CD8-positive, alpha-beta T cell (primary cell): ENCODE measurements at regions of chr5 and their contacts with region 1.

Region 1: GRCh38 chr5:160390787-160391696 is 8.8 kb downstream of the FAM200C start:
- DNase-seq: peak in 2 of 9 experiments; percentile 19 to 42
- ATAC-seq: peak; percentile 23
- H3K4me3 ChIP-seq: no peak overlapping the region
- H3K4me3 Mint-ChIP-seq: no peak overlapping the region
- H3K27ac ChIP-seq: no peak overlapping the region
- H3K27ac Mint-ChIP-seq: no peak overlapping the region
- H3K4me1 ChIP-seq: no peaks in the 10 kb centered on the region
- H3K4me1 Mint-ChIP-seq: no peaks in the 10 kb centered on the region
- H3K27me3 ChIP-seq: no peaks in the 10 kb centered on the region
- H3K27me3 Mint-ChIP-seq: no peaks in the 10 kb centered on the region
- CTCF ChIP-seq: peak; percentile 66

Region 2: GRCh38 chr5:159444441-159445082 is 946.5 kb before region 1 on chr5:
- CTCF ChIA-PET with region 1: interaction called, 3 read pairs
- POLR2A ChIA-PET with region 1: no interaction called
- intact Hi-C with region 1: loop called in 1 of 2 experiments (anchors 5 kb)
- DNase-seq: peak in 2 of 9 experiments; percentile 30 to 64
- ATAC-seq: no peak
- H3K4me3 ChIP-seq: no peak overlapping the region
- H3K4me3 Mint-ChIP-seq: no peak overlapping the region
- H3K27ac ChIP-seq: no peak overlapping the region
- H3K27ac Mint-ChIP-seq: no peak overlapping the region
- H3K4me1 ChIP-seq: no peaks in the 10 kb centered on the region
- H3K4me1 Mint-ChIP-seq: no peaks in the 10 kb centered on the region
- H3K27me3 ChIP-seq: no peaks in the 10 kb centered on the region
- H3K27me3 Mint-ChIP-seq: no peaks in the 10 kb centered on the region
- CTCF ChIP-seq: no peak

Region 3: DNA sequence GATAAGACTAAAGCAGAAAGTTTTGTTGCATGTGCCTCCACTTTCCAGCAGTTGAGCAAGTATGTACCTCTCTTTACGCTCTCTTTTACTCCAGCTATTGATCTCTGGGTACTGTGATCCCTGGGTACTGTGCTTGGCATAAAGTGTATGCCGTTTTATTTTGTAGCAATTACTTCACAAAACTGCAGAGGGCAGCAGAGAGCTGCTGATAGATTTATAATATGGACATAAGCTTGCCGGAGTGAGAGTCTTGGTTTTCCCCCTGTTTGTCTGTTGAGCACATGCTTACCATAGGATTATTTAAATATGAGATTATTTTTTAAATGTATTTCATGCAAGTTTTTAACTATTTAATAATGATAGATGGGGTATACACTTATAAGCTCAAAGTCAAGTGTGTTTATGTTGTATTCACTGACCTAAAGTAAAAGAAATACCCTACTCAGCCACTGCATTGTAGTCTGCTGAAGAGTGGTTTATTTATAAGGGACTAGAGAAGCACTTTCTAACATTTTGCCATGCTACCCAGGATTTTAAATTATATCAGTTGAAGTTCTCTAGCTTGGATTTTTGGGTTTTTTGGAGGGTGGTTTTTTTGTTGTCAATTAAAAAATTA is 369.1 kb before region 1 on chr5:
- CTCF ChIA-PET with region 1: interaction called, 12 read pairs
- POLR2A ChIA-PET with region 1: no interaction called
- intact Hi-C with region 1: loop called (anchors 2 kb)
- DNase-seq: peak; percentile 4 to 80 (median 53)
- ATAC-seq: peak; percentile 91
- H3K4me3 ChIP-seq: no peak overlapping the region
- H3K4me3 Mint-ChIP-seq: no peak overlapping the region
- H3K27ac ChIP-seq: no peak overlapping the region
- H3K27ac Mint-ChIP-seq: peak overlapping the region; percentile 42
- H3K4me1 ChIP-seq: peaks cover 3% of the 10 kb centered on the region
- H3K4me1 Mint-ChIP-seq: peaks cover 35% of the 10 kb centered on the region
- H3K27me3 ChIP-seq: no peaks in the 10 kb centered on the region
- H3K27me3 Mint-ChIP-seq: no peaks in the 10 kb centered on the region
- CTCF ChIP-seq: peak; percentile 91

Region 4: DNA sequence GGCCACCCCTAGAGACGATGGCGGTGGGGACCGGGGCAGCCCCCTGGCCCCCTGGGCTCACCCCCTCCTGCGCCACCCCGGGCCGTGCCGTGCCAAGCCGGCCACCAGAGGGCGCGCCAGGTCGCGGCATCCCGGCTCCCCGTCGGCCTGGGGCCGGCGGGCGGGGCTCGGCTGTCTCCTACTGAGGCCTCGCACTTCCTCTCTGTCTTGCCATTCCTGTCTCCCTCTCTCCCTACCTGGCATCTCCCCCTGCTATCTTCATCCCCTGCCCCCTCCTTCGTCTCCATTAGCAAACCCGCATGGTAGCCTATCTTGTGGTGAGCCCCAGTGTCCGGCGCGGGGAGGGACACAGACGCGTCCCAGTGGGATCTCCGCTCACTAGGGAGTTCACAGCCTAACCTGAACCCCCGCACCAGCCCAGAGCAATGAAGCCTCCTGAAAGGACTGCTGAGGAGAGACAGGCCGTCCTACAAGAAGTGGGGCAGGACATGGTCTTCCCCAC is 191.6 kb before region 1 on chr5:
- CTCF ChIA-PET with region 1: interaction called, 5 read pairs
- POLR2A ChIA-PET with region 1: no interaction called
- intact Hi-C with region 1: loop called (anchors 1 kb)
- DNase-seq: peak; percentile 48 to 81 (median 68)
- ATAC-seq: peak; percentile 96
- H3K4me3 ChIP-seq: peak overlapping the region; percentile 50 to 51
- H3K4me3 Mint-ChIP-seq: peak overlapping the region; percentile 73
- H3K27ac ChIP-seq: no peak overlapping the region
- H3K27ac Mint-ChIP-seq: no peak overlapping the region
- H3K4me1 ChIP-seq: peaks cover 11% of the 10 kb centered on the region
- H3K4me1 Mint-ChIP-seq: peaks cover 8% of the 10 kb centered on the region
- H3K27me3 ChIP-seq: no peaks in the 10 kb centered on the region
- H3K27me3 Mint-ChIP-seq: peaks cover 16% of the 10 kb centered on the region
- CTCF ChIP-seq: peak; percentile 79

Region 5: GRCh38 chr5:160445132-160445531 is 54.1 kb after region 1 on chr5:
- CTCF ChIA-PET with region 1: no interaction called
- POLR2A ChIA-PET with region 1: no interaction called
- intact Hi-C with region 1: no loop called
- DNase-seq: no peak
- ATAC-seq: no peak
- H3K4me3 ChIP-seq: no peak overlapping the region
- H3K4me3 Mint-ChIP-seq: no peak overlapping the region
- H3K27ac ChIP-seq: no peak overlapping the region
- H3K27ac Mint-ChIP-seq: no peak overlapping the region
- H3K4me1 ChIP-seq: no peaks in the 10 kb centered on the region
- H3K4me1 Mint-ChIP-seq: no peaks in the 10 kb centered on the region
- H3K27me3 ChIP-seq: no peaks in the 10 kb centered on the region
- H3K27me3 Mint-ChIP-seq: no peaks in the 10 kb centered on the region
- CTCF ChIP-seq: no peak

Region 6: GRCh38 chr5:160702934-160703333 is 311.9 kb after region 1 on chr5:
- CTCF ChIA-PET with region 1: no interaction called
- POLR2A ChIA-PET with region 1: no interaction called
- intact Hi-C with region 1: no loop called
- DNase-seq: peak in 1 of 9 experiments; percentile 13
- ATAC-seq: no peak
- H3K4me3 ChIP-seq: no peak overlapping the region
- H3K4me3 Mint-ChIP-seq: no peak overlapping the region
- H3K27ac ChIP-seq: no peak overlapping the region
- H3K27ac Mint-ChIP-seq: no peak overlapping the region
- H3K4me1 ChIP-seq: no peaks in the 10 kb centered on the region
- H3K4me1 Mint-ChIP-seq: no peaks in the 10 kb centered on the region
- H3K27me3 ChIP-seq: no peaks in the 10 kb centered on the region
- H3K27me3 Mint-ChIP-seq: no peaks in the 10 kb centered on the region
- CTCF ChIP-seq: no peak